ENCODE measurements at regions of chr6 and their contacts with region 1.

Region 1: DNA sequence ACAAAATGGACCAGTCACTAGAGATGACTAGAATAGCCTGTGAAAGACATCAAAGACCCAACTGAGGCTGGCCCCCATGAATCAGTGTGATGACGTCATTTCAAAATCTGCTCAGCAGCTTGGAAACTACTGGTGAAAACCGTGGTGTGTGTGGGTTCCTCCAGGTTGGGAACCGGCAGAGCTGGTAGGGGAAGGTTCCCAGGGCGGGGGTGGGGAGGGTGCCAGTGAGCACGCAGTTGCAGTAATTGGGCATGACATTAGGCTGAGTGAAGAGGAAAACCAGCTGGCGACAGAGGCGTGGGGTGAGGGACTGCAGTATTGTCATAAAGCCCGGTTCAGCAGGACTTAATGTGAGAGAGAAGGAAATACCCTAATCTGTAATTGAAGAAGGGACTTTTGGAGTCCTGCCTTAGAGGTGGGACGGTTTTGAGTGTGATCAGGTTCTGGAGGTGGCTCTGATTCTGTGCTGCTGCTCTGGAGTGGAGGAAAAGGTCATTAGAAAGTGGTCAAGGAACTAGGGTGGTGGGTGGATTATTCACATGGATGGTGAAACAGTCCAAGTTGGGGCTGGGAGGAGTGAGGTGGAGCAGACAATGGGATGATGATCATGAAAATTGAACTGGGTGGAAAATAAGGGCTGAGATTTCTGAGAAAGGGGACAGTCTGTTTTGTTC is 52.0 kb upstream of the MTHFD1L start:
- DNase-seq: no peak
- H3K4me3 ChIP-seq: no peak overlapping the region
- H3K27me3 ChIP-seq: no peaks in the 10 kb centered on the region
- CTCF ChIP-seq: no peak

Region 2: GRCh38 chr6:150220634-150221551 is 592.6 kb before region 1 on chr6:
- CTCF ChIA-PET with region 1: no interaction called
- POLR2A ChIA-PET with region 1: no interaction called
- DNase-seq: no peak
- H3K4me3 ChIP-seq: no peak overlapping the region
- H3K27me3 ChIP-seq: no peaks in the 10 kb centered on the region
- CTCF ChIP-seq: no peak

Region 3: GRCh38 chr6:150395398-150396009 is 418.0 kb before region 1 on chr6:
- CTCF ChIA-PET with region 1: interaction called, 19 read pairs
- POLR2A ChIA-PET with region 1: no interaction called
- DNase-seq: no peak
- H3K4me3 ChIP-seq: no peak overlapping the region
- H3K27me3 ChIP-seq: 0 out of 2 replicates have a peak, but pooled peaks cover 3% of the 10 kb centered on the region
- CTCF ChIP-seq: peak; percentile 81

Region 4: DNA sequence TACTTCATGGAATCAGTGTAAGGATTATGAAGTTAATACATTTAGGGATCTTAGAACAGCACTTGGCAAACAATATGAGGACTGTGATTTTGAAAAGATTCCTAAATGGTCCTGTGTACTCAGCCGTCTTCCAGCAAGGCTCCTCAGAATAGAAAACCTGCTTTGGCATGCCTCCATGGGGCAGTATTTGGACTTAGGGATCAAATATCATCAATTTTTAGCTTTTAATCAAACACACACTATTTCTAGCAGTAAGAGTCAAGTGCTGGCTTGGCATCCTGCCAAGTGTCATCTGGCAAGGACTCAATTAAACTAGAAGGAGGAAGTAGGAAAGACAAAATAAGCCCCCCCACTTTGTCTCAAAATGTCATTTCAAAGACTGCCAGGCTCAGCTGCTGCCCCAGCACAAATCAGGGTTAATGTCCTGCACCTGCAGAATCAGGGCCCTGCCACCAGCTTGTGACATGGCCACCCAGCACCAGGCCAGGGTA is 403.8 kb before region 1 on chr6:
- CTCF ChIA-PET with region 1: interaction called, 11 read pairs
- POLR2A ChIA-PET with region 1: no interaction called
- DNase-seq: no peak
- H3K4me3 ChIP-seq: no peak overlapping the region
- H3K27me3 ChIP-seq: peaks cover 2% of the 10 kb centered on the region; the same call in 1 of the 2 replicates
- CTCF ChIP-seq: no peak

Region 5: GRCh38 chr6:150417899-150418826 is 395.3 kb before region 1 on chr6:
- CTCF ChIA-PET with region 1: interaction called, 135 read pairs
- POLR2A ChIA-PET with region 1: no interaction called
- DNase-seq: peak; percentile 72
- H3K4me3 ChIP-seq: peak overlapping the region; percentile 33
- H3K27me3 ChIP-seq: peaks cover 8% of the 10 kb centered on the region
- CTCF ChIP-seq: peak; percentile 80

Region 6: DNA sequence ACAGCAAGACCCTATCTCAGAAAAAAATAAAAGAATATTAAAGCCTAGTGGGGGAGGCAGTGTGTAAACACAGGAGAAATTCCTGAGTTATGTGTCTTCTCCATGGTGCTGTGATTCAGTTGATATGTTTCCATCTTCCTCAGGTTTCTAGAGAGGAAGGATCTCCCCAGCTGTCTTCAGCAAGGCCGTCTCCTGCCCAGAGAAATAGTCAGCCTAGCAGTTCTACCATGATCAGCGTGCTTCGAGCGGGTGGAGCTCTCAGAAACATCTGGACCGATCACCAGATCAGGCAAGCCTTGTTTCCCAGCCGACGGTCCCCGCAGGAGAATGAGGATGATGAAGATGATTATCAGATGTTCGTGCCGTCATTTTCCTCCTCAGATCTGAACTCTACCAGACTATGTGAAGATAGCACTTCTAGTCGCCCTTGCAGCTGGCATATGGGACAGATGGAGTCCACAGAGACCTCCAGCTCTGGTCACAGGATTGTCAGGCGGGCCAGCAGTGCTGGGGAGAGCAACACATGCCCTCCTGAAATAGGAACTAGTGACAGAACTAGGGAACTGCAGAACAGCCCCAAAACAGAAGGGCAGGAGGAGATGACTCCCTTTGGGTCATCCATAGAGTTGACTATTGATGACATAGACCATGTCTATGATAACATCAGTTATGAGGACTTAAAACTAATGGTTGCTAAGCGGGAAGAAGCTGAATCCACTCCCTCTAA is 17.1 kb after region 1 on chr6:
- CTCF ChIA-PET with region 1: interaction called, 12 read pairs
- POLR2A ChIA-PET with region 1: no interaction called
- DNase-seq: peak; percentile 26
- H3K4me3 ChIP-seq: no peak overlapping the region
- H3K27me3 ChIP-seq: no peaks in the 10 kb centered on the region
- CTCF ChIP-seq: 0 out of 2 replicates have a peak, but pooled peaks have one; percentile 6

Region 7: GRCh38 chr6:150865406-150866146 is 52.1 kb after region 1 on chr6 and contains the start of gene MTHFD1L:
- CTCF ChIA-PET with region 1: interaction called, 10 read pairs
- POLR2A ChIA-PET with region 1: no interaction called
- DNase-seq: peak; percentile 45
- H3K4me3 ChIP-seq: peak within 1 kb of the TSS; percentile 83
- H3K27me3 ChIP-seq: no peaks in the 10 kb centered on the region
- CTCF ChIP-seq: peak; percentile 50
- polyA plus RNA-seq, gene MTHFD1L: 58.9 and 70.7 TPM in 2 replicates

Region 8: DNA sequence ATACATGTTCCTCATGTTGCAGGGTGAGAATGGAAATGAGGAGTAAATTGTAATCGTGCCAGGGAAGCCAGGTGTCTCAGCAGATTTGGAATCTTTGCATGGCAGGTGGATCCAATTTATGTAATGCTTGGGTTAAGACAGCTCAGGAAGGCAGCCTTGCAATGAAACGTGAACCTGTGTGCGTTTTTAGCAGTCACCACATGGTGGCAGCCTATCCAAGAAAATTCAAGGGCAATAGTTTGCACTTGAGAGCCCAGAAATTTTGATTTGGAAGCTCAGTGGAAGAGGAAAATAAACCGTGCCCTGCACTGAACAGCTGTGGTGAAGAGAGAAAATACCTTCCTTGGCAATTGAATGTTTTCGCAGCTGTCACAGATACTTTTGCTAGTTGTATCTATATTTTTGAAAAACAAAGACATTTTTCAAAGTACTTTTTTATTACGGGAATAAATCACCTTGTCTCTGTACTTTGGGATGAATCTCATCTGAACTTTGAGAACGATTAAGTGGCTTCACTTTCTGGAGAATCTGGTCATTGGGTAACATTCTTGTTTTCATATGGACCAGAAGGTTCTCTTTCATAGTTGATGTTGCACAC is 78.5 kb after region 1 on chr6:
- CTCF ChIA-PET with region 1: interaction called, 10 read pairs
- POLR2A ChIA-PET with region 1: no interaction called
- DNase-seq: peak; percentile 52
- H3K4me3 ChIP-seq: no peak overlapping the region
- H3K27me3 ChIP-seq: no peaks in the 10 kb centered on the region
- CTCF ChIP-seq: peak; percentile 77